PC-9 (cell line): ENCODE measurements at regions of chr7 and their contacts with region 1.

Region 1: GRCh38 chr7:100049441-100050311 is at the start of gene ZSCAN21:
- DNase-seq: peak; percentile 54 to 81
- H3K4me3 ChIP-seq: peak within 1 kb of the TSS; percentile 89
- H3K27ac ChIP-seq: peak within 1 kb of the TSS; percentile 65
- H3K4me1 ChIP-seq: peaks cover 9% of the 10 kb centered on the region; the same call in 1 of the 2 replicates
- H3K27me3 ChIP-seq: no peaks in the 10 kb centered on the region
- CTCF ChIP-seq: no peak; the same call in 1 of the 2 replicates
- total RNA-seq, gene ZSCAN21: 8.9 and 9.7 TPM in 2 replicates

Region 2: GRCh38 chr7:99910976-99911375 is 138.7 kb before region 1 on chr7:
- CTCF ChIA-PET with region 1: interaction called, 4 read pairs
- POLR2A ChIA-PET with region 1: no interaction called
- intact Hi-C with region 1: loop called (anchors 2 kb)
- DNase-seq: no peak
- H3K4me3 ChIP-seq: no peak overlapping the region
- H3K27ac ChIP-seq: no peak overlapping the region
- H3K4me1 ChIP-seq: no peaks in the 10 kb centered on the region
- H3K27me3 ChIP-seq: no peaks in the 10 kb centered on the region
- CTCF ChIP-seq: no peak

Region 3: DNA sequence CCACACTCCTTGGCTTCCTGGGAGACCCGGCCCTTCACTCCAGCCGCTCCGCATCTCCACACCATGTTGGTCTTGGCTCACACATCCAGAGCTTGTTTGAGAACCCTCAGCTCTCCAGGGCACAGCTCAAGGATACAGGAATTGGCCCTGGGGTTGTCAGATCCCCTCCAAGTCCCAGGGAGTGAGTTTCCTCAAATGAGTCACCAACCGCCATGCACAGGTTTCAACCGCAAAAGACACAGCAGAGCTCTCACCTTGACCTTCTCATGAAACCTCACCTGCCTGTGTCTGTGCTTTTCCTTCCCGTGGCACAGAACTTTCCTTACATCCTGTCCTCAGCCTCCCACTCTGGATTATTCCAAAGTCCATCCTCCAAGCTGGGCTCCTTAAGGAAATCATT is 94.4 kb before region 1 on chr7:
- CTCF ChIA-PET with region 1: interaction called, 13 read pairs
- POLR2A ChIA-PET with region 1: no interaction called
- intact Hi-C with region 1: no loop called
- DNase-seq: peak; percentile 79 to 88
- H3K4me3 ChIP-seq: no peak overlapping the region
- H3K27ac ChIP-seq: peak overlapping the region; percentile 22
- H3K4me1 ChIP-seq: peaks cover 12% of the 10 kb centered on the region
- H3K27me3 ChIP-seq: peaks cover 18% of the 10 kb centered on the region; the same call in 1 of the 2 replicates
- CTCF ChIP-seq: no peak

Region 4: DNA sequence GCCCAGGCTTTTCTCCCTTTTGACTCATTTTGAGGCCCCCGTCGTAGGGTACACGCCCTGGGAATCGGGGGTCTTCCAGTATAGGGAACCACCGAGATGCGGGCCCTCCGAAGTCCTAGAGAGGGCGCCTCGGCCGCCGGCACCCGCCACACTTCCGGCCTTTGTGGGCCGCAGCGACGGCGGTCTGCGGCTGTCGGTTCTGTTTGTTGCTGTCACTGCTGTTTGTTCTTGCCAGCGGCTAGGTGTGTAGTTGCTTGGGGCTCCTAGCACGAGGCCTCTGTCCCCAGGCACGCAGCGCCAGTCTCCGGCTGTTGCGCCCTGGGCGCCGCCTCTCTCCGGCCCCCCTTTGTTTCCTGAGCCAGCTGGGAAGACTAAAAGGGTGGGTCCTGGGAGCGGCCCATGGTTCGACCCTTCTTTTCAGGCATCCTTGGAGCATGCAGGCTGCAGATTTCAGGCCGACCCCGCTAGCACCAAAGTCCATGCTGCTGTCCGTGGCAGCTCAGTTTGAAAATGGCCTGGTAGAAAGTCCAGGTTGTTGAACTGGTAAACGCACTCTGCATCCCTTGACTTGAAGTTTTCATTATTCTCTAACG is 52.0 kb before region 1 on chr7:
- CTCF ChIA-PET with region 1: interaction called, 15 read pairs
- POLR2A ChIA-PET with region 1: no interaction called
- intact Hi-C with region 1: loop called (anchors 1 kb)
- DNase-seq: no peak
- H3K4me3 ChIP-seq: no peak overlapping the region
- H3K27ac ChIP-seq: no peak overlapping the region
- H3K4me1 ChIP-seq: 0 out of 2 replicates have a peak, but pooled peaks cover 3% of the 10 kb centered on the region
- H3K27me3 ChIP-seq: peaks cover 44% of the 10 kb centered on the region
- CTCF ChIP-seq: no peak

Region 5: GRCh38 chr7:100015232-100016209 is 34.2 kb before region 1 on chr7 and contains the start of gene ZKSCAN1:
- CTCF ChIA-PET with region 1: no interaction called
- POLR2A ChIA-PET with region 1: interaction called, 12 read pairs
- intact Hi-C with region 1: loop called (anchors 2 kb)
- DNase-seq: peak; percentile 79 to 80
- H3K4me3 ChIP-seq: peak within 1 kb of the TSS; percentile 95
- H3K27ac ChIP-seq: peak within 1 kb of the TSS; percentile 67
- H3K4me1 ChIP-seq: peaks cover 13% of the 10 kb centered on the region
- H3K27me3 ChIP-seq: no peaks in the 10 kb centered on the region
- CTCF ChIP-seq: no peak
- total RNA-seq, gene ZKSCAN1: 69.4 and 70.3 TPM in 2 replicates

Region 6: GRCh38 chr7:100221231-100221718 is 171.6 kb after region 1 on chr7:
- CTCF ChIA-PET with region 1: interaction called, 18 read pairs
- POLR2A ChIA-PET with region 1: no interaction called
- intact Hi-C with region 1: no loop called
- DNase-seq: no peak
- H3K4me3 ChIP-seq: no peak overlapping the region
- H3K27ac ChIP-seq: no peak overlapping the region
- H3K4me1 ChIP-seq: no peaks in the 10 kb centered on the region
- H3K27me3 ChIP-seq: no peaks in the 10 kb centered on the region
- CTCF ChIP-seq: no peak